ENCODE measurements at regions of chr3 and their contacts with region 1.

Region 1: DNA sequence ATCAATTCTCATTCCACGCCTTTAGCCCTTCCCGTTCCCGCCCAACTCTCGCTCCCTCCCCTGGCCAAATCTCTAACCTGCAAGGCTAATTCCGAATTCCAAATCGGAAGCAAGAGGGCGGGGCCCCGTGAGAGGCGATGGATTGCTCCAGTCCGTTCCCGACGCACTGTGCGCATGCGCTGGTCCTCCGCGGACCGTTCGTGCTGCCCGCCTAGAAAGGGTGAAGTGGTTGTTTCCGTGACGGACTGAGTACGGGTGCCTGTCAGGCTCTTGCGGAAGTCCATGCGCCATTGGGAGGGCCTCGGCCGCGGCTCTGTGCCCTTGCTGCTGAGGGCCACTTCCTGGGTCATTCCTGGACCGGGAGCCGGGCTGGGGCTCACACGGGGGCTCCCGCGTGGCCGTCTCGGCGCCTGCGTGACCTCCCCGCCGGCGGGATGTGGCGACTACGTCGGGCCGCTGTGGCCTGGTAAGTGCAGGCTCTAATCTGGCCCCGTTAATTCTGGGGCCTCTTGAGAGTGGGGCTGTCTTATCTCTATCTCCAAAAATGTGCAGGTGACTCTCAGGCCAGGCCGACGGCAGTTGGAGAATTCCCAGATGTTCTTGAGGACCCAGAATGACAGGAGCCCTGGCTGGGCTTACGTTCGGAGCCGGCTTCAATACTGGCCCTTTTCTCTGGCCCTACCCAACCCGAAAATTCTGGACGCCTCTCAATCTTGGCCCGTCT is at the start of gene OPA1:
- DNase-seq: peak; percentile 96
- ATAC-seq: peak; percentile 90
- H3K4me3 Mint-ChIP-seq: peak within 1 kb of the TSS; percentile 97
- H3K27ac Mint-ChIP-seq: peak within 1 kb of the TSS; percentile 100
- H3K4me1 Mint-ChIP-seq: peaks cover 41% of the 10 kb centered on the region
- H3K27me3 Mint-ChIP-seq: no peaks in the 10 kb centered on the region
- total RNA-seq, gene OPA1: 94.9 to 115 TPM

Region 2: DNA sequence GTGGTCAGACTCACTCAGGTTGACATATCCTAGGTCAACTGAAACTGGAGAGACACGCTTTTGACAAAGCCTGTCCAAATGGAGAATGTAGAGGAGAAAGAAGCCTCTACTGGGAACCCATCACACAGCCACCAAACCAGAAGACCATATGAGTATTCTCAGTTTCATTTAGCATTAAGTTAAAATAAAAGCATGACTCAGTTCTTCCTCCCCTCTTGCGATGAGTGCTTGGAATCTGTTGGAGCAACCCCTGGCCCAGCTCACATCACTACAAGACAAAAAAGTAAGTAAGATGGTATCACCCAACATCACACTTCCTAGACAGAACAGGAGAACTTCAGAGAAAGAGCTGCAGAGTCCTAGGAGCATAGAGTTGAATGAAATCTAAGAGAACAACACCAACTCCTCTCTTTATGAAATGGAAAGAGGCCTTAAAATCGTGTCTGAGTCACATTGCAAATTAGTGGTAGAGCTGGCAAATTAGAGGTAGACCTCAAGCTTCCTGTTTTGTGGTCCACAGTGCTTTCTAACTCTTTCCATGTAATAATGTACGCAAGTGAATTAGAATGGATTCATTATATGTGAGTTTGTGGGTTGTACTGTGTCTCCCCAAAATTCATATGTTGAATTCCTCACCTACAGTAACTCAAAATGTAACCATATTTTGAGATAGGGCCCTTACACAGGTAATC is 917.0 kb before region 1 on chr3:
- CTCF ChIA-PET with region 1: no interaction called
- POLR2A ChIA-PET with region 1: no interaction called
- intact Hi-C with region 1: loop called in 1 of 2 experiments (anchors 2 kb)
- DNase-seq: peak; percentile 42
- ATAC-seq: peak; percentile 77
- H3K4me3 Mint-ChIP-seq: peak overlapping the region; percentile 14
- H3K27ac Mint-ChIP-seq: peak overlapping the region; percentile 76
- H3K4me1 Mint-ChIP-seq: peaks cover 9% of the 10 kb centered on the region
- H3K27me3 Mint-ChIP-seq: peaks cover 13% of the 10 kb centered on the region

Region 3: GRCh38 chr3:192812743-192813383 is 780.2 kb before region 1 on chr3:
- CTCF ChIA-PET with region 1: no interaction called
- POLR2A ChIA-PET with region 1: no interaction called
- intact Hi-C with region 1: no loop called
- DNase-seq: peak; percentile 38
- ATAC-seq: peak; percentile 42
- H3K4me3 Mint-ChIP-seq: no peak overlapping the region
- H3K27ac Mint-ChIP-seq: no peak overlapping the region
- H3K4me1 Mint-ChIP-seq: peaks cover 8% of the 10 kb centered on the region
- H3K27me3 Mint-ChIP-seq: peaks cover 7% of the 10 kb centered on the region

Region 4: GRCh38 chr3:192879336-192880106 is 713.6 kb before region 1 on chr3:
- CTCF ChIA-PET with region 1: no interaction called
- POLR2A ChIA-PET with region 1: no interaction called
- intact Hi-C with region 1: loop called in 1 of 2 experiments (anchors 10 kb)
- DNase-seq: no peak
- ATAC-seq: no peak
- H3K4me3 Mint-ChIP-seq: no peak overlapping the region
- H3K27ac Mint-ChIP-seq: no peak overlapping the region
- H3K4me1 Mint-ChIP-seq: peaks cover 3% of the 10 kb centered on the region
- H3K27me3 Mint-ChIP-seq: peaks cover 9% of the 10 kb centered on the region

Region 5: DNA sequence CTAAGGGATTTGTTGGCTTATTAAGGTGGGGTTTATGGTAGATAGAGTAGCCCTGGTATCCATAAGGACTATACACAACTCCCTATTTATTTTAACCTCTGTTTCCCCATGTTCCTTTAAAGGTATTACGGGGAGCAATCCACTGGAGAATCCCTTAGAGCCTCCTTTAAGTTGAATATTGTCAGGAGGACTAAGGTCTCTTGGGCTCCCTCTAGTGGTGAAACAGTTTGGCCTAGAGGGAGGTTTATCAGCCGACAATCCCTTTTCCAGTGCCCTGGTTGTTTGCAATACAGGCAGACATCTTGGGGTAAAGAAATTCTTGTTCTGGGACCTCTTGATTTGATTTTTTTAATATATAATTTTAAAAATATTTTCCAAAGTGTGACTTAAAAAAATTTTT is 12.8 kb after region 1 on chr3:
- CTCF ChIA-PET with region 1: interaction called, 13 read pairs
- POLR2A ChIA-PET with region 1: no interaction called
- intact Hi-C with region 1: no loop called
- DNase-seq: peak; percentile 64
- ATAC-seq: peak; percentile 82
- H3K4me3 Mint-ChIP-seq: no peak overlapping the region
- H3K27ac Mint-ChIP-seq: no peak overlapping the region
- H3K4me1 Mint-ChIP-seq: peaks cover 27% of the 10 kb centered on the region
- H3K27me3 Mint-ChIP-seq: no peaks in the 10 kb centered on the region

Region 6: DNA sequence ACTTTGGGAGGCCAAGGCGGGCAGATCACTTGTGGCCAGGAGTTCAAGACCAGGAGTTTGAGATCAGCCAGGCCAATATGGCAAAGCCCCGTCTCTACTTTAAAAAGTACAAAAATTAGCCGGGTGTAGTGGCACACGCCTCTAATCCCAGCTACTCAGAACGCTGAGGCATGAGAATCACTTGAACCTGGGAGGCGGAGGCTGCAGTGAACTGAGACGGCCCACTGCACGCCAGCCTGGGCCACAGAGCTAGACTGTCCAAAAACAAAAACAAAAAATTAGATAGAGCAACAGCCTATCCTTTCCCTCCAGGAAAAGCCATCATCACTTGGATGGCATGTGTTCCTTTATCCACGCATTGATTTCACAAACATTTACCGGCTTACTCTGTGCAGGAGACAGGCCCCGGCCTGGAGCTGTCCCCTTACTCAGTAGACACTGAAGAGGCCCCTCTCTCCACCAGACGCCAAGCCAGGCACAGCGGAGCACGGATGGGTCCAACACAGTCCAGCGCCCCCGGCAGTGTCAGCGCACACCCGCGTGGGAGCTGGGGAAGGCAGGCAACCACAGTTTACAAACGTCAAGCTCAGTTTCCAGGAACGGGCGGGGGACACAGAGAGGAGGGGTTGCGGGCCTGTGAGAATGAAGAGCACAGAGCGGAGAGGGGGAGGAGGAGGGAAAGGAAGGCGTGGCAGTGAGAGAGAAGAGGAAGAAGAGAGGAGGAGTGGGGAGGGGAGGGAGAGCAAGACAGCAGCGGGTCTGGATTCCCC is 802.9 kb after region 1 on chr3:
- CTCF ChIA-PET with region 1: no interaction called
- POLR2A ChIA-PET with region 1: no interaction called
- intact Hi-C with region 1: loop called in 1 of 2 experiments (anchors 5 kb)
- DNase-seq: peak; percentile 79
- ATAC-seq: peak; percentile 73
- H3K4me3 Mint-ChIP-seq: peak overlapping the region; percentile 60
- H3K27ac Mint-ChIP-seq: peak overlapping the region; percentile 73
- H3K4me1 Mint-ChIP-seq: peaks cover 55% of the 10 kb centered on the region
- H3K27me3 Mint-ChIP-seq: peaks cover 12% of the 10 kb centered on the region

Measured in activated CD4-positive, alpha-beta T cell treated with anti-CD3 and anti-CD28 coated beads for 36 hours (primary cell).